PC-3 (cell line): ENCODE measurements at regions of chr7 and their contacts with region 1.

Region 1: GRCh38 chr7:13742811-13743210 is 246.7 kb downstream of the ETV1 start:
- DNase-seq: peak; percentile 69
- ATAC-seq: peak; percentile 73
- H3K4me3 ChIP-seq: no peak overlapping the region
- H3K27ac ChIP-seq: peak overlapping the region; percentile 56
- H3K4me1 ChIP-seq: peaks cover 24% of the 10 kb centered on the region
- H3K27me3 ChIP-seq: no peaks in the 10 kb centered on the region
- CTCF ChIP-seq: peak; percentile 78

Region 2: DNA sequence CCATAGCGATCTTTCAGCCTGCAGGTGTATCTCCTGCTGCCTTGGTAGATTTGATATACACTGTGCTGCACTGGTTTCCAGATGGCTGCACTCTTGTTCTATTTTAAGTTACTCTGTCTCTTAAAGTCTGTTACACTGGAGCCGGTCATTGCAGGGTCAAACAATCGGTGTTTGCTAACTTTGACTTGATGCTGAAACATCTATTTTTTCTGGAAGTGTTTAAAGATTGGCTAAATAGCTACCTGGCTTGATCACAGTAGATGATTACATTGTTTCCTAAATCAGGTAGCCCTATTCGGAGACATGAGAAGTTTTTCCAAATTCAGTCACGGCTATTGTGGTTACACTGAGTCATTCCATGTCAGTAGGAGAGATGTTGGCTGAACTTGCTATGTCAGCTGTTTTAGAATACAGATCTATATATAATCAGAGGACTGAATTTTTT is 328.1 kb before region 1 on chr7:
- CTCF ChIA-PET with region 1: no interaction called
- POLR2A ChIA-PET with region 1: no interaction called
- intact Hi-C with region 1: loop called (anchors 1 kb)
- DNase-seq: peak; percentile 92
- ATAC-seq: peak; percentile 97
- H3K4me3 ChIP-seq: peak overlapping the region; percentile 2; the same call in 1 of the 2 replicates
- H3K27ac ChIP-seq: 0 out of 2 replicates have a peak overlapping the region, but pooled peaks have one; percentile 4
- H3K4me1 ChIP-seq: peaks cover 17% of the 10 kb centered on the region
- H3K27me3 ChIP-seq: no peaks in the 10 kb centered on the region
- CTCF ChIP-seq: no peak

Region 3: DNA sequence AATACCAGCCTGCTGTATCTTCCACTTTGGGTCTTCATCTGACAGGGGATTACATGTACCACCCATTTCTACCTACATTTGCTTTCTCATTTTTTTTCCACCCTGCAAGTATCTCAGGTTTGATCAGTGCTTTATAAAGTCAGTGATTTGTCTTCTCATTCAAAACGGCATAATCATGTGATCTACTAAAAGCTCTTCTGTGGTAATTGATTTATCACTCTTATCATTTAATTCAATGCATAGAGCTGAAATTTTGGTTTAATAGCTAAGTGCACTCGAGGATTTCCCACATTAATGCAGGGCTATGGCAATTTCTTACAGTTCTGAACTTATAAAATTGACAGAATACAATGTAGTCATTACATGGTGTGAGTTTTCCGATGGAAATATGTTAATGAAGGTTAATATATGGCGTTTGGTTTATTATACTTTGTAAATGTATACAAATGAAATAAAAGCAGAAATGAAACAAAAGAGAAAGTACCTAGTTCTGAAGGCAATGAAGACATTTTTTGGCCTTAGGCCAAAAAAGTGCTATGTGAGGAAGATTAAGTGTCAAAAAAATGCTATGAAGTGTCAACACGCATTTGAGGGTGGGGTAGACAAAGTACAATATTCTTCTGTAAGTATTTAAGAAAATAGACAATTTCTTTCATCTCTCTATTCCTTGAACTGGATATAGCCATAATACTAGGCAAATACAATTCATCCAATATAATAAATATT is 210.6 kb before region 1 on chr7:
- CTCF ChIA-PET with region 1: no interaction called
- POLR2A ChIA-PET with region 1: no interaction called
- intact Hi-C with region 1: loop called (anchors 1 kb)
- DNase-seq: no peak
- ATAC-seq: no peak
- H3K4me3 ChIP-seq: no peak overlapping the region
- H3K27ac ChIP-seq: no peak overlapping the region
- H3K4me1 ChIP-seq: no peaks in the 10 kb centered on the region
- H3K27me3 ChIP-seq: no peaks in the 10 kb centered on the region
- CTCF ChIP-seq: no peak

Region 4: DNA sequence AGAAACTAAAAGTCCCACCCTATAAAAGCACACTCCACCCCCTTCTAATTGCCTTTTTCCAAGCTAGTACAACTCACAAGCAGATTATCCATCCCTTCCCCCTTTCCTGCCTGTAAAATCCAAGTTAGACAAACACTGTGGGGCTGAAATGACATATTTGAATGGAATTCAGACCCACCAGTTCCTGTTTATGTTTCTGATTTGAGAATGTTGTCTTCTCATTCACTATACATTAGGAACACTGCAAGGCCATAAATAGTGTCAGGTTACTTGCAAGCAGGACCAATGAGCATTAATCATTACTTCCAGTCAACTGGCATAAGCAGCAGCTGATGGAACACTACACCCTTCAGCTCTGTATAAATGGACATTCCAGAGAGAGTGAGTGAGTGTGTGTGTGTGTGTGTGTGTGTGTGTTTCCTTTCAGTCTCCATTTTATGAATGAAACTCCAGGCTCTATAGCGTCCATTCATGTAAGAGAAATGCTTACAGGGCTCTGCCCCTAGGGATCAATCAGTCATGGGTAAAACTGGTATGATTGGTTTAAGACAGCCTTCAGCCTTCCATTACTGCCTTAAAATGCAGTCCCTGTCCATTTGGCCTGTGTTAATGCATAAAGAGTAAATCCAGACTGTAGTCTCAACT is 177.4 kb after region 1 on chr7:
- CTCF ChIA-PET with region 1: no interaction called
- POLR2A ChIA-PET with region 1: no interaction called
- intact Hi-C with region 1: loop called (anchors 1 kb)
- DNase-seq: peak; percentile 97
- ATAC-seq: peak; percentile 99
- H3K4me3 ChIP-seq: peak overlapping the region; percentile 57
- H3K27ac ChIP-seq: peak overlapping the region; percentile 93
- H3K4me1 ChIP-seq: peaks cover 21% of the 10 kb centered on the region
- H3K27me3 ChIP-seq: no peaks in the 10 kb centered on the region
- CTCF ChIP-seq: no peak

Region 5: GRCh38 chr7:14691597-14692203 is 948.9 kb after region 1 on chr7:
- CTCF ChIA-PET with region 1: interaction called, 3 read pairs
- POLR2A ChIA-PET with region 1: no interaction called
- intact Hi-C with region 1: loop called (anchors 10 kb)
- DNase-seq: peak; percentile 57
- ATAC-seq: peak; percentile 29; the same call in 1 of the 2 replicates
- H3K4me3 ChIP-seq: no peak overlapping the region
- H3K27ac ChIP-seq: no peak overlapping the region
- H3K4me1 ChIP-seq: no peaks in the 10 kb centered on the region
- H3K27me3 ChIP-seq: no peaks in the 10 kb centered on the region
- CTCF ChIP-seq: peak; percentile 93